Activated CD8-positive, alpha-beta T cell treated with anti-CD3 and anti-CD28 coated beads for 36 hours (primary cell): ENCODE measurements at regions of chrX and their contacts with region 1.

Region 1: GRCh38 chrX:45758319-45758718 is 557.6 kb upstream of the DIPK2B start:
- DNase-seq: peak; percentile 75
- ATAC-seq: peak; percentile 45
- H3K4me3 Mint-ChIP-seq: peak overlapping the region; percentile 77
- H3K27ac Mint-ChIP-seq: peak overlapping the region; percentile 99
- H3K4me1 Mint-ChIP-seq: peaks cover 71% of the 10 kb centered on the region
- H3K27me3 Mint-ChIP-seq: no peaks in the 10 kb centered on the region
- CTCF ChIP-seq: no peak

Region 2: DNA sequence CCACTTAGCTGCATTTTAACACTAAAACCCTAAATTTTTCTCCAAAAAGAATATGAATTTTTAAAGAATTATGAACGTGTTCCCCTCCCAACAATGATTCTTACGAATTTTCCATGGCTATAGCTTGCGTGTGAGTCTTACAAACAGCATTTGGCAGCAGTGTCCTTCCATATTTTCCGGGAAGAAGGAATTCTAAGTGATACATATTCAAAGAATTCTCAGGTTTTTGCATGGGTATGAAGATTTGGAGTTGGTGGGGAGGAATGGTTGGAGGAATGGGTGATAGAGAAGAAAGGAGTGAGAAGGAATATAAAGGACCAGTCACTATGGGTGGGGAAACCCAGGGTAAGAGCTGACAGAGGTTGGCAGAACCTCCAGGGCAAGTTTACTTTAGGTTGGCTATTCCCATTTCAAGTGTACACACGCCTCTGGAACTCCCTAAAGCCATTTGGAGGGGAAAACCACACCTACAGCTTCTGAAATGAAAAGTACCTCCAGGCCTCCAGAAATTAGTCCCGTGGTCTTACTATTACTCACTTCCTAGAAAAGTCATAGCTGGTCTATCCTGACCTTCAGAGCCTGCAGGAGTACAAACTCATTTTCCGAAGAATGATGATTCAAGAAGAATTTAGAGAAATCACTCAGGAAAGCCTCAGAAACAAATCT is 136.8 kb before region 1 on chrX:
- CTCF ChIA-PET with region 1: no interaction called
- POLR2A ChIA-PET with region 1: interaction called, 3 read pairs
- intact Hi-C with region 1: loop called (anchors 10 kb)
- DNase-seq: peak; percentile 7
- ATAC-seq: peak; percentile 80
- H3K4me3 Mint-ChIP-seq: no peak overlapping the region
- H3K27ac Mint-ChIP-seq: no peak overlapping the region
- H3K4me1 Mint-ChIP-seq: peaks cover 17% of the 10 kb centered on the region
- H3K27me3 Mint-ChIP-seq: no peaks in the 10 kb centered on the region
- CTCF ChIP-seq: no peak

Region 3: DNA sequence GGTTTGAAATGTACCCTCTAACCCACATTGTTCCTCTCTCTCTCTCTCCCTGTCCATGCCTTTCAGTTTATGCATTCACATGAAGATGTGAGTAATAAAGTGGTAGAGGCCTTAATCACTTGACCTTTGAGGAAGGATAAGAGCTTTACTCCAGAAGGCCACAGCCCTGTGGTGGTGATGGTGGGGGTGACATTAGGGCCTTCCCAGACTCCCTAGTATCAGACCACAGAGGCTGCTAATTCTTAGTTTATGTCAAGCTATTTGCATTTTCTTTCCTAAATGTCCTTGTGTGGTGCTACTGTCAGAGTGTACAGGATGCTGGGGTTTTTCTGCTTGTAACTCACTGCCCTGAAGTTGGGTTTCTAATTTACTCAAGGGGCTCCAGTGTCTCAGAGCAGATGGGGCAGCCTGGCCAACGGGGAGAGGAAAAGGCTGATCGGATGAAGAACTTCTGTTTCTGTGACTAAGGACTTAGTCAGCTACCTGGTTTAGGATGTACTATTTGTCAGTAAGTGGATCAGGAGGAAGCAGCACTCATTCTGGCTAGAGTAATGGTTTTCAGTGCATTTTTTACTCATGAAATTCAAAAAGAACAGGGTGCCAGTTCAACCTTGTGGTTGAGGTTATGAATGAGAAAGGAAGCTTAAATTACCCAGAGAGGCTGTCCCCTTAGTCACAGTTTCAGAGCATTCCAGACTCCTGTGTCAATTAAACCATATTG is 48.1 kb before region 1 on chrX:
- CTCF ChIA-PET with region 1: no interaction called
- POLR2A ChIA-PET with region 1: interaction called, 20 read pairs
- intact Hi-C with region 1: loop called (anchors 2 kb)
- DNase-seq: peak; percentile 80
- ATAC-seq: peak; percentile 91
- H3K4me3 Mint-ChIP-seq: no peak overlapping the region
- H3K27ac Mint-ChIP-seq: peak overlapping the region; percentile 80
- H3K4me1 Mint-ChIP-seq: peaks cover 59% of the 10 kb centered on the region
- H3K27me3 Mint-ChIP-seq: no peaks in the 10 kb centered on the region
- CTCF ChIP-seq: no peak

Region 4: DNA sequence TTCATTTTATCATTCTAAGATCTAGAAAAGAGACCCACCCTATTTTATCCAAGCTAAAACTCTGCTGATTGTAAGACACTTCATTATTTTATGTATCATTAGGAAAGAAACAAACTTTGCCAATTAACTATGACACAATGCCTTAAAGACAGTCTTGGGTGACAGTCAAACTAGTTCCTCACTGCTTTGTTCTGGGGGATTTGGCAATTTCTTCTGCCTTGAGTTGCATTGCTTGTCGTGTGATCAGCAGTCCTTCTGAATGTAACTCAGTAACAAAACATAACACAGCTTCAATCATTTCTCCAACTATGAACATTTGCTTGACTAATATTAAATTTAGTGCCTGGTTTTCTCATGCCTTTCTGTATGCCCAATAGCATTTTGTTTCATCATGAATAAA is 20.3 kb after region 1 on chrX:
- CTCF ChIA-PET with region 1: no interaction called
- POLR2A ChIA-PET with region 1: no interaction called
- intact Hi-C with region 1: no loop called
- DNase-seq: no peak
- ATAC-seq: no peak
- H3K4me3 Mint-ChIP-seq: no peak overlapping the region
- H3K27ac Mint-ChIP-seq: no peak overlapping the region
- H3K4me1 Mint-ChIP-seq: peaks cover 78% of the 10 kb centered on the region
- H3K27me3 Mint-ChIP-seq: no peaks in the 10 kb centered on the region
- CTCF ChIP-seq: no peak

Region 5: GRCh38 chrX:45849253-45849862 is 91.0 kb after region 1 on chrX:
- CTCF ChIA-PET with region 1: interaction called, 3 read pairs
- POLR2A ChIA-PET with region 1: interaction called, 7 read pairs
- intact Hi-C with region 1: loop called (anchors 5 kb)
- DNase-seq: peak; percentile 40
- ATAC-seq: no peak
- H3K4me3 Mint-ChIP-seq: peak overlapping the region; percentile 92
- H3K27ac Mint-ChIP-seq: peak overlapping the region; percentile 91
- H3K4me1 Mint-ChIP-seq: peaks cover 40% of the 10 kb centered on the region
- H3K27me3 Mint-ChIP-seq: no peaks in the 10 kb centered on the region
- CTCF ChIP-seq: peak; percentile 27